ENCODE measurements at regions of chr2 and their contacts with region 1.

Region 1: DNA sequence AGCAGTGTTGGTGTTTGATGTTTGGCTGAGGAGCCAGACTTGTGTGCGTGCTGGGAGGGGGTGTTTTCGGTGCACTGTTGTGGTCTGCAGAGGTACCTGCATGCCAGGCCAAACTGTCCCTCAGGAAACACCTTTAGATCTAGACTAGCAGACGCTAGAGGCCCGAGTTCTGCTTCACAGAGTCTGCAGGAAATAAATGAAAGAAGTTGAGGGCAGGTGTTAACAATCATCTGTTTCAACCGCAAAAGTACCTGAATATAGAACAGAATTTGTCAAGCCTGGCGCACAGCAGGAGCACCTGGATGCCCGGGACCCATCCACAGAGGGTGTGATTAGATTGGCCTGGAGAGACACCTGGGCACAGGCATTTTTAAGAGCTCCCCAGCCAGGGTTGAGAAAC is 40.5 kb upstream of the REL start:
- DNase-seq: peak; percentile 35
- ATAC-seq: peak; percentile 63
- H3K4me3 Mint-ChIP-seq: peak overlapping the region; percentile 64
- H3K27ac Mint-ChIP-seq: peak overlapping the region; percentile 91
- H3K4me1 Mint-ChIP-seq: peaks cover 90% of the 10 kb centered on the region
- H3K27me3 Mint-ChIP-seq: no peaks in the 10 kb centered on the region
- CTCF ChIP-seq: no peak

Region 2: DNA sequence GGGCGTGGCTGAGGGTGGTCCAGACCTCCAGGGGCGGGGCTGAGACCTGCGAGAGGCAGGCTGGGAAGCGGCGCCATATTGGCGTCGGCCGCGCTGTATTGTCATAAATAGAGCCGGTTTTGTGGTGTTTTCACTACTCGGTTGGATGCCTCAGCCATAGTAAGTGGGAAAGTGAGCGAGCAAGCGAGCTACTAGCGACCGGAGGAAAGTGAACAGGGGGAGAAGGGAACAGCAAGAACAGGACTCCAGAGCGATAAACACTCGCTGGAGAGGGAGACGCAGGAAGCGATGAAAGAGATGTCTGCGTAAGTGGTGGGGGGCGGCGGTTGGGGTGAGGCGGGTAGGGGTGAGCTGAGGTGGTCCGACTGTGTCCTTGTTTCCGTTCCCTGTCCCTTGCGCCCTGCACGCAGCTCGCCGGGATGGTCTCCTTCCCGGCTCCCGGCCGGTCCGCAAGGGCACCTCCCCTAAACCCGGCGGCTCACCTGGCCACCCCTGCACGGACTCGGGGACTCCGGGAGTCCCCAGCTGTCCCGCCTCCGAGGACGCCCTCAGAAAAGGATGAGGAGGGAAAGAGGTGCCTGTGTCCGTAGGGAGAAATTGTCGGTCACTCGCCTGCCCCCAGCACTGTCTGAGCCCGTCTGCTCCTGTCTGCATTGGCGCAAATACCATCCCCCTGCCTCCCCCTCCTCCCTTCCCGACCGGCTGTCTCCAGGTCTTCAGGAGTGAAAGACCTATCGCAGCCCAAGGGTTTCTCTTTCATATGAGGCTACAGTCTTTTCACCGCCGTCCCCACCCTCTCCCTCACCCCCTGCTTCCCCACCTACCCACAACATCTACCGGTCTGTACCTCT is 84.5 kb before region 1 on chr2 and contains the start of gene PAPOLG:
- CTCF ChIA-PET with region 1: no interaction called
- POLR2A ChIA-PET with region 1: no interaction called
- intact Hi-C with region 1: loop called (anchors 5 kb)
- DNase-seq: peak; percentile 96
- ATAC-seq: peak; percentile 100
- H3K4me3 Mint-ChIP-seq: peak within 1 kb of the TSS; percentile 100
- H3K27ac Mint-ChIP-seq: peak within 1 kb of the TSS; percentile 99
- H3K4me1 Mint-ChIP-seq: peaks cover 29% of the 10 kb centered on the region
- H3K27me3 Mint-ChIP-seq: no peaks in the 10 kb centered on the region
- CTCF ChIP-seq: no peak
- total RNA-seq, gene PAPOLG: 20.3 and 20.5 TPM in 2 replicates

Region 3: GRCh38 chr2:60806988-60807681 is 33.7 kb before region 1 on chr2:
- CTCF ChIA-PET with region 1: interaction called, 7 read pairs
- POLR2A ChIA-PET with region 1: interaction called, 17 read pairs
- intact Hi-C with region 1: loop called (anchors 1 kb)
- DNase-seq: peak; percentile 34
- ATAC-seq: peak; percentile 93
- H3K4me3 Mint-ChIP-seq: peak overlapping the region; percentile 59
- H3K27ac Mint-ChIP-seq: peak overlapping the region; percentile 93
- H3K4me1 Mint-ChIP-seq: peaks cover 54% of the 10 kb centered on the region
- H3K27me3 Mint-ChIP-seq: no peaks in the 10 kb centered on the region
- CTCF ChIP-seq: no peak

Region 4: DNA sequence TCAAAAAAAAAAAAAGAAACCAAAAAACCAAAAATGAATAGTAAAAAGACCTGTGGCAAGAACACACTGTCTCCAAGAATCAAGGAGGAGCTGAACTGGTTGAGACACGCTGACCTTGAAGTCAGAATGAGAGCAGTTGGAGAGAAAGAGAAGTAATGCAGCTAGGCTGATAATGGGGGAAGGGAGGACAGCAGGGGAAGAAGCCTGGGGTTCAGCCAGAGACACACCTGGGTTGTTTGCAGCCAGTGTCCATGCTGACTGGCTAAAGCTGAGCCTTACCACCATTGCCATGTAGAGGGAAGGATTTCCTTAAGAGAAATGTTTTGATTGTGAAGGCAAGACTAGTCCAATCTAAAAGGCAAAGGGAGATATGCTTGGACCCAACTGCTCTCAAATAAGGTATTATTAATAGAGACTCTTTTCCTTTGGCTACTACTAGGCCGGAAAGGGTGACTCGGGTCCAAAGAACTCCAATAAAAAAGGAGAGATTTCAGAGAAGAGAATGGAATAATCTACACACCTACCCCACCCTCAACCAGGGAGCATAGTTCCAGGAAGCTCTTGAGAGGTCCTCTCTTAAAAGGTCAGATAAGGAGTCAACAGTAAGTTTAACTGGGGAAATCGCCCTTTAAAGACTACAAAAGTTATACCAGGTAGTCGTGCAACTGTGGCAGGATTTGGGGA is 15.2 kb after region 1 on chr2:
- CTCF ChIA-PET with region 1: interaction called, 4 read pairs
- POLR2A ChIA-PET with region 1: interaction called, 6 read pairs
- intact Hi-C with region 1: loop called (anchors 2 kb)
- DNase-seq: no peak
- ATAC-seq: no peak
- H3K4me3 Mint-ChIP-seq: no peak overlapping the region
- H3K27ac Mint-ChIP-seq: no peak overlapping the region
- H3K4me1 Mint-ChIP-seq: peaks cover 18% of the 10 kb centered on the region
- H3K27me3 Mint-ChIP-seq: no peaks in the 10 kb centered on the region
- CTCF ChIP-seq: no peak

Region 5: GRCh38 chr2:60867848-60868247 is 27.0 kb after region 1 on chr2:
- CTCF ChIA-PET with region 1: interaction called, 6 read pairs
- POLR2A ChIA-PET with region 1: interaction called, 26 read pairs
- intact Hi-C with region 1: loop called (anchors 1 kb)
- DNase-seq: no peak
- ATAC-seq: peak; percentile 87
- H3K4me3 Mint-ChIP-seq: peak overlapping the region; percentile 71
- H3K27ac Mint-ChIP-seq: peak overlapping the region; percentile 96
- H3K4me1 Mint-ChIP-seq: peaks cover 65% of the 10 kb centered on the region
- H3K27me3 Mint-ChIP-seq: no peaks in the 10 kb centered on the region
- CTCF ChIP-seq: no peak

Region 6: GRCh38 chr2:60998628-60999545 is 158.0 kb after region 1 on chr2:
- CTCF ChIA-PET with region 1: interaction called, 11 read pairs
- POLR2A ChIA-PET with region 1: interaction called, 6 read pairs
- intact Hi-C with region 1: no loop called
- DNase-seq: no peak
- ATAC-seq: peak; percentile 70
- H3K4me3 Mint-ChIP-seq: no peak overlapping the region
- H3K27ac Mint-ChIP-seq: peak overlapping the region; percentile 75
- H3K4me1 Mint-ChIP-seq: peaks cover 42% of the 10 kb centered on the region
- H3K27me3 Mint-ChIP-seq: no peaks in the 10 kb centered on the region
- CTCF ChIP-seq: no peak

Region 7: DNA sequence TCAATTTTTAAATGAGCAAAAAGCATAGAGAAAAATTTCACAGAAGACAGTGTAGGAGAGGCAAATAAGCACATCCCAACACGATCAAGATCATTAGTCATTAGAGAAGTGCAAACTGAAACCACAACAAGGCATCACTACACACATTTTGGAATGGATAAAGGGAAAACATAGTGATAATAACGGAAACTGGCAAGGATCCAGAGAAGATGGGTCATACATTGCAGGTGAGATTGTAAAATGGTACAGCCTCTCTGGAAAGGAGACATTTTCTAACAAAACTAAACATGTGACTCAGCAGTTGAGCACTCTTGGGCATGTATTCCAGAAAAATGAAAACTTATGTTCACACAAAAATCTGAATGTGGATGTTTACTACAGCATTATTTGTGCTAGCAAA is 1763.5 kb after region 1 on chr2:
- CTCF ChIA-PET with region 1: no interaction called
- POLR2A ChIA-PET with region 1: no interaction called
- intact Hi-C with region 1: no loop called
- DNase-seq: no peak
- ATAC-seq: no peak
- H3K4me3 Mint-ChIP-seq: no peak overlapping the region
- H3K27ac Mint-ChIP-seq: no peak overlapping the region
- H3K4me1 Mint-ChIP-seq: peaks cover 22% of the 10 kb centered on the region
- H3K27me3 Mint-ChIP-seq: peaks cover 4% of the 10 kb centered on the region
- CTCF ChIP-seq: no peak

Measured in activated B cell treated with CpG ODN at 0.5 μM for 24 hours (primary cell).